Panc1 (cell line): ENCODE measurements at regions of chr20 and their contacts with region 1.

Region 1: GRCh38 chr20:63178889-63179686 is 36.8 kb downstream of the YTHDF1 start:
- DNase-seq: no peak
- ATAC-seq: peak; percentile 46
- H3K4me3 ChIP-seq: peak overlapping the region; percentile 16 to 33; a peak in 3 of 4 replicates
- H3K27ac ChIP-seq: no peak overlapping the region
- H3K4me1 ChIP-seq: peaks cover 11% of the 10 kb centered on the region
- H3K27me3 ChIP-seq: peaks cover 4% of the 10 kb centered on the region; the same call in 1 of the 2 replicates
- CTCF ChIP-seq: peak; percentile 88

Region 2: DNA sequence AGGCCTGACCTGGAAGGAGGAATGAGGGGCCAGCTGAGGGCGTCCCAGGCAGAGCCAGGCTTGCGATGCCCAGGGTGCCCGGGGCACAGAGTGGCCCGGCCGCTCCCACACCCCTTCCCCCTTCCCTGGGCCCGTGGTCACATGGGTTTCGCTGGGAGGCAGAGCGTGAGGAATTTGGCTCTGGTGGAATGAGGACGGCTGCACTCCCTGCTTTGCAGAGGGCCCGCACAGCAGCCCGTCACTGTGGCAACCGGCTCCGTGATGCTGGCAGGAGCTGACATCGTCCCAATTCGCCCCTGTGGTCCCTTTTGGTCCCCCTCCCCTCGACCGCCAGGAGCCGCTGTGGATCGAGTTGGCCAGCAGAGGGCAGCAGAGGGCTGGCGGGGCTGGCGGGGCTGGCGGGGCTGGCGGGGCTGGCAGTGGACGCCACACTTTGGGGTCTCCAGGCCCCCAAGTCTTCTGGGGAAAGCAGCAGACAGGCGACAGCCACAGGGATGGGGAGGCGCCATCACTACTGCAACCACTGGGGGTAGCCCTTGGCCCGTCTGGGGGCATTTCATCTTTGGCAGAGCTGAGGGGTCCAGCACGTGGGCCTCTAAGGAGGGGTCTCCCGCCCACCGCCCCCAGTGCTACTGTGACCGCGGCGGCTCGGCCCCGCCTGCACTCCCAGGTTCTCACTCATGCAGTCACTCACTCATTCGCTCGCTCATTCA is 122.7 kb before region 1 on chr20:
- CTCF ChIA-PET with region 1: interaction called, 3 read pairs
- POLR2A ChIA-PET with region 1: no interaction called
- in situ Hi-C with region 1: no loop called
- intact Hi-C with region 1: loop called (anchors 5 kb)
- DNase-seq: no peak
- ATAC-seq: peak; percentile 74
- H3K4me3 ChIP-seq: no peak overlapping the region
- H3K27ac ChIP-seq: no peak overlapping the region
- H3K4me1 ChIP-seq: no peaks in the 10 kb centered on the region
- H3K27me3 ChIP-seq: no peaks in the 10 kb centered on the region
- CTCF ChIP-seq: peak; percentile 97

Region 3: DNA sequence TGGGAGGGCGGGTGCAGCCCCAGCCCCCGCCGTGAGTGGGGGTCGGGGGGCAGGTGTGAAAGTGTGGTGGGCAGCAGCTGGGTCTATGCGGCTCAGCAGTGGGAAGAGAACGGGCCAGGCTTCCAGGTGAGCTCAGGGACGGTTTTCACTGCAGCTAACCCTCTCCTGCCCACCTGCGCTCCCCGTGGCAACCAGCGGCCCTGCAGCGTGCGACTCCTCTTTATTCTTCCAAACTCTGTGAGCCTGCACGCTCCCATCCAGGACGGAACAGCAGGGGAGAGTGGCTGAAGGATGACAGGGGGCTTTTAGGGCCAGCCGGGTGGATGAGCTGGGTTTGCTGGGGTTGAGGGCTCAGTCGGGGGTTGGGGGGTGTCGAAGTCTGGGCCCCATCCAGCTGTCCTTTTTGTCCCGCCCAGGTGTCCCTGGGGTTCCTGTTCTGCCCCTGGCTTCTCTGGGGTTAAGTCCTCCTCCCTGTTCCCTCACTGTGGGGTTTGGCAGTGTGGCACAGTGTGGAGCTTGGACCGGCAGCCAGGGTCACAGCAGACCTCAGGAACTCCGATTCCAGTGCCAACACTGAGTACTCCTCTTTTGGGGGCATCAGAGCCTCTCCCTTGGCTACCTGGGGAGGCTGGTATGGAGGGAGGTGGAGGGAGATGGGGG is 55.8 kb after region 1 on chr20:
- CTCF ChIA-PET with region 1: interaction called, 11 read pairs
- POLR2A ChIA-PET with region 1: no interaction called
- in situ Hi-C with region 1: no loop called
- intact Hi-C with region 1: no loop called
- DNase-seq: no peak
- ATAC-seq: peak; percentile 70
- H3K4me3 ChIP-seq: no peak overlapping the region
- H3K27ac ChIP-seq: peak overlapping the region; percentile 75
- H3K4me1 ChIP-seq: peaks cover 77% of the 10 kb centered on the region
- H3K27me3 ChIP-seq: no peaks in the 10 kb centered on the region
- CTCF ChIP-seq: peak; percentile 83